Colonic mucosa (tissue), 4 donors: ENCODE measurements at regions of chr21 and their contacts with region 1.

Region 1: DNA sequence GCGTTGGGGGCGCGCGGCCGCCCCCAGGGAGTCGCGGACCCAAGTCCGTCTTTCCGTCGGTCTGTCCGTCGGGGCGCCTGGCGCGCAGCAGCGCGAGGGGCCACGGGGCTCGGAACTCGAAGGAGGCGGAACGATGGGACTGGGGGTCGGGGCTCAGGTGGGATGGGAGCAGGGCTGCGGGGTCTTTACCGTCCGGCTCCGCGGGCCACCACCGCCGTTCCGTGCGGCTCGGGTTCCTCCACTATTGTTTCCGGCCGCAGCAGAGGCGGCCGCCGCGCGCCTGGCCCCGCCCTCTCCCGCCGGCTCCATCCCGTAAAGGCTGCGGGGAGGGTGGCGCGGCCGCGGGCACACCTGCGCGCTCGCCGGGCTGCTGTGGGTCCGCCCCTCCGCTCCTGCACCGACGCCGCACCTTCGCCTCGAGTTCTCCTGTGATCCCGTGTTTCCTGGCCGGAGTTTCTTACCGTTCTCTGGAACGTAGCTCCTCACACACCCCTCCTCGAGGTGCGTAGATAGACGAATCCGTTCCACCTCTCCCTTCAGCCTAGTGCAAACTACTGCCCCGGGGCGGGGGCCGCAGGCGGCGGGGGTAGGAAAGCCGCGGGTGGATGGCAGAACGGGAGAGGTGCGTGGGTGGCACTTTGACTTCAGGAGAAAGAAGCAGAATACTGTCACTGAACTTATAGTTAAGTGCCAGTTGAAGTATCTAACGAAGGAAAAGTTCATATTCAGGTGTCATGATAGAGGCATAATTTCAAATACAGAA is at the start of gene C21orf91:
- DNase-seq: peak; percentile 90
- H3K4me3 ChIP-seq: peak within 1 kb of the TSS; percentile 98
- H3K27ac ChIP-seq: peak within 1 kb of the TSS; percentile 89
- H3K4me1 ChIP-seq: no peaks in the 10 kb centered on the region
- H3K27me3 ChIP-seq: no peaks in the 10 kb centered on the region
- CTCF ChIP-seq: no peak
- total RNA-seq, gene C21orf91: 3.8 to 9.6 TPM

Region 2: DNA sequence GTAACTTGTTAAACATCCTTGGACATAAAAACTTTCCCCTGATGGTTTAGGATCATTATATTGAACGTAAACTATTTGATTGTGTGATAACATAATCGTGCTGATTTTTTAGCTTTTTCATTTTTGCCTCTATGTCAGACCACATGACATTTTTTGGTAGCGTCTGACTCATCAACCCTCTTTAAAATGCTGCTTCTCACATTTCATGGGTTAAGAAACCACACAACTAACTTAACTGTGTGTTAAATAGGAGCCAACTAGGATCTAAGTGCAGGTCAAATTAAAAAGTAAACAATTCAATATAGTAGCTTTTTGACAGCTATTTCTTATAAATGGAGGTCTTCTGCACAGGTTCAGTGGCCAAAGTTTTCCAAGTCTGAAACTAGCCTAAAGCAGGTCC is 216.4 kb before region 1 on chr21:
- intact Hi-C with region 1: loop called (anchors 10 kb)
- DNase-seq: no peak
- H3K4me3 ChIP-seq: no peak overlapping the region
- H3K27ac ChIP-seq: no peak overlapping the region
- H3K4me1 ChIP-seq: peaks cover under 1% of the 10 kb centered on the region
- H3K27me3 ChIP-seq: no peaks in the 10 kb centered on the region
- CTCF ChIP-seq: no peak